ENCODE measurements at regions of chr1 and their contacts with region 1.

Region 1: DNA sequence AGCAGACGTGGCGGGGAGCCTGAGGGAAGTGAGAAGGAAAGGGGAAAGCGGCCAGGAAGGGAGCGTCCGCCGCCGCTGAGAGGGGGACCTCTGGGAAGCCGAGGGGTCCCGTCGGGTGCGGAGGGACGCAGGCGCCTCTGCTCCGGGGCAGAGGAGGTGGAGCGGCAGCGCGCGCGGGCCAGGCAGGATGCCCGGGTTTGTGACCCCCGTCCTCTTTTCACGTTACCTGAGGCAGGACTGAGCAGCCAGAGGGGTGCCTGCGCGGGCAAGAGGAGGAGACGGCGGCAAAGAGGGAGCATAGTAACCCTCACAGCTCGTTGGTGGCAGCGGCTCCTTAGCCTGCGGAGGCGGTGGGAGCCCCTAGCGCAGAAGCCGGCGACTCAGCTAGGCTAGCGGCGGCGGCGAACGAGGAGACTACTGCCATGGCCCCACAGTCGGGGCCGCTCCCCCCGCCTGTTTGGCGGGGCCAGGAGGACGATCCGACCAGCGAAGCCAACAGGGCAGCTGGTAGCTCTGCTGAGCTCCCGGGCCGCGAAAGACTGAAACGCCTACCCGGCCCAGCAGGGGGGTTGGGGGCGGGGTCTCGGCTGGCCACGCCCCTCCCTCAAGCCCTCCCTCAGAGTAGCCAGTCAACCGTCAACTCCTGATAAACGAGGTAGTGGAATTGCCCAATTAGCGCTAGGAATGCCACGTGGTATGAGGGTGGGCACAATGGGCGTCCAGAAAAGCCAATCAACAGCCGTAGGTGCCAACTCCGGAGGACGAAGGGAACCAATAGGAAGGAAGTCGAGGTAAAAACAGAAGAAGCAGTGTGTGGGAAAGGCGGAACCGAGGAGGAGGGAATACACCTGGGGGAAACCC is at the start of gene TESK2:
- DNase-seq: peak; percentile 89 to 99 (median 98)
- ATAC-seq: peak; percentile 96
- H3K4me3 ChIP-seq: peak within 1 kb of the TSS; percentile 76
- H3K4me3 Mint-ChIP-seq: no peak within 1 kb of the TSS
- H3K27ac ChIP-seq: peak within 1 kb of the TSS; percentile 77
- H3K27ac Mint-ChIP-seq: no peak within 1 kb of the TSS
- H3K4me1 ChIP-seq: peaks cover 9% of the 10 kb centered on the region in 2 donors
- H3K4me1 Mint-ChIP-seq: peaks cover 5 to 15% (median 10%) of the 10 kb centered on the region in 7 donors
- H3K27me3 ChIP-seq: no peaks in the 10 kb centered on the region
- H3K27me3 Mint-ChIP-seq: peaks cover 0 to 4% (median 0%) of the 10 kb centered on the region in 5 donors
- total RNA-seq, gene TESK2: 3.3 to 8.9 (median 7.4) TPM

Region 2: GRCh38 chr1:44714944-44715571 is 775.8 kb before region 1 on chr1:
- CTCF ChIA-PET with region 1: interaction called, 4 read pairs
- POLR2A ChIA-PET with region 1: no interaction called
- intact Hi-C with region 1: loop called in 1 of 2 experiments (anchors 1 kb)
- DNase-seq: peak; percentile 46 to 77 (median 69)
- ATAC-seq: peak; percentile 98
- H3K4me3 ChIP-seq: peak overlapping the region; percentile 28
- H3K4me3 Mint-ChIP-seq: peak overlapping the region; percentile 24 to 72 (median 66)
- H3K27ac ChIP-seq: peak overlapping the region; percentile 39
- H3K27ac Mint-ChIP-seq: peak overlapping the region; percentile 40 to 85 (median 68)
- H3K4me1 ChIP-seq: peaks cover 11 to 37% of the 10 kb centered on the region in 2 donors
- H3K4me1 Mint-ChIP-seq: peaks cover 39 to 52% (median 47%) of the 10 kb centered on the region in 7 donors
- H3K27me3 ChIP-seq: no peaks in the 10 kb centered on the region
- H3K27me3 Mint-ChIP-seq: peaks cover 0 to 9% (median 0%) of the 10 kb centered on the region in 5 donors

Region 3: GRCh38 chr1:44799770-44800584 is 690.9 kb before region 1 on chr1 and contains the start of gene PLK3:
- CTCF ChIA-PET with region 1: no interaction called
- POLR2A ChIA-PET with region 1: no interaction called
- intact Hi-C with region 1: loop called (anchors 10 kb)
- DNase-seq: peak; percentile 93 to 99 (median 98)
- ATAC-seq: peak; percentile 92
- H3K4me3 ChIP-seq: peak within 1 kb of the TSS; percentile 66
- H3K4me3 Mint-ChIP-seq: peak within 1 kb of the TSS; percentile 85 to 98 (median 93)
- H3K27ac ChIP-seq: peak within 1 kb of the TSS; percentile 94
- H3K27ac Mint-ChIP-seq: peak within 1 kb of the TSS; percentile 84 to 99 (median 98)
- H3K4me1 ChIP-seq: peaks cover 17 to 24% of the 10 kb centered on the region in 2 donors
- H3K4me1 Mint-ChIP-seq: peaks cover 19 to 43% (median 33%) of the 10 kb centered on the region in 7 donors
- H3K27me3 ChIP-seq: no peaks in the 10 kb centered on the region
- H3K27me3 Mint-ChIP-seq: no peaks in the 10 kb centered on the region
- total RNA-seq, gene PLK3: 92.8 to 456 (median 142) TPM

Region 4: DNA sequence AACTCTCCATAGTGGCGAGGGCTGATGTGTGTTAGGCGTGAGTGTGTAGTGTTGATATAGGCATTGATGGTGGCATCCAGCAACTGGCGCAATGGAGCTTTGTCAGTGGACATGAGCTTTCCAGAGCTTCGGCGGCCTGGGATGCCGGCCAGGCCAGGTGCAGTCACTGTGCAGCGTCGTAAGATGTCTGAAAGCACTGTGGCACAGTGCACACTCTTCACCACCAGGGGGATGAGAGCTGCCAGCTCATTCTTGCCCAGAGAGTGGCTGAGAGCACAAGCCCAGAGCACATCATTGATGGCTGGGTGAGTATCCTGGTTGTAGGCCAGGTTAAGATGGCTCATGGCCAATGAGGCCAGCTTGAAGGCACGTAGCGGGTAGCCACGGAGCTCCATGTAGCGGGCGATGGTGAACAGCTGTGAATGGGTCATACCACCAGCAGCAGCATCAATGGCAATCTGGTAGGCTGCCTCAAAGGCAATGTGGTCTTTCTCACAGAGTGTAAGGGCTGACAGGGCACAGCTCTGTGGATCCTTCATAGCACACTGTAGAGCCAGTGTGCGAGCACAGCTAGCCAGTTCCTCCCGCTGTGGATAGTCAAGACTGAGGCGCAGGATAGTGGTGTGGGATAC is 472.1 kb before region 1 on chr1:
- CTCF ChIA-PET with region 1: interaction called, 77 read pairs
- POLR2A ChIA-PET with region 1: interaction called, 42 read pairs
- intact Hi-C with region 1: loop called in 1 of 2 experiments (anchors 1 kb)
- DNase-seq: peak in 8 of 9 donors; percentile 34 to 70 (median 58)
- ATAC-seq: peak; percentile 88
- H3K4me3 ChIP-seq: no peak overlapping the region
- H3K4me3 Mint-ChIP-seq: no peak overlapping the region
- H3K27ac ChIP-seq: no peak overlapping the region
- H3K27ac Mint-ChIP-seq: peak overlapping the region in 4 of 9 donors; percentile 15 to 91 (median 54)
- H3K4me1 ChIP-seq: peaks cover 0 to 5% of the 10 kb centered on the region in 2 donors
- H3K4me1 Mint-ChIP-seq: peaks cover 7 to 21% (median 17%) of the 10 kb centered on the region in 7 donors
- H3K27me3 ChIP-seq: no peaks in the 10 kb centered on the region
- H3K27me3 Mint-ChIP-seq: no peaks in the 10 kb centered on the region

Region 5: DNA sequence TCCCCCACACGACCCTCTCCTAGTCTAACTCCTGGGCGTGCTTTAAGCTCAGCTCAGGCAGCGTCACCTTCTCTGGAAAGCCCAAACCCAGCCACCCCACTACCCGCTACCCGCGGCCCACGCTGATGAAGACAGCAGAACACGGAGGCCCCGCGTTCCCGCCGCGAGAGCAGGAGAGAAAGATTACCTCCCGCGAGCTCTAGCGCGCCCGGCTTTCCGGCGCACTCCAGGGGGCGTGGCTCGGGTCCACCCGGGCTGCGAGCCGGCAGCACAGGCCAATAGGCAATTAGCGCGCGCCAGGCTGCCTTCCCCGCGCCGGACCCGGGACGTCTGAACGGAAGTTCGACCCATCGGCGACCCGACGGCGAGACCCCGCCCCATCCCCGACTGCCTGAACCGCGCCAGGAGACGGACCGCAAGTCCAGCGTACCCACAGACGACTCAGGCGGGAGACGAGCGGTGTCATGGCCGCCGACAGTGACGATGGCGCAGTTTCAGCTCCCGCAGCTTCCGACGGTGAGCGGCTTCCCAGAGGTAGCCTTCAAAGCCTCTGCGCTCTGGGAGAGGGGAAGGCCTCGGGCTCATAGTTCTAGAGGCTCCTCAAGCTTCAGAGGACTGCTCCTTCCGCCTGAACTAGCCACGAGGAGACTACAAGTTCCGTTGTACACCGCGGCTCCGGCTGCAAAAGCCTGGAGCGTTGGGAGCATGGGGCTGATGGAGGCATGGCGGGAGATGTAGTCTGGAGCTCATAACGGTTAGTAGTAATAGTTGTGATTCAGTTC is 150.9 kb before region 1 on chr1 and contains the starts of genes MUTYH and TOE1:
- CTCF ChIA-PET with region 1: interaction called, 26 read pairs
- POLR2A ChIA-PET with region 1: interaction called, 45 read pairs
- intact Hi-C with region 1: loop called (anchors 1 kb)
- DNase-seq: peak; percentile 84 to 95 (median 89)
- ATAC-seq: peak; percentile 91
- H3K4me3 ChIP-seq: peak within 1 kb of the TSS; percentile 83
- H3K4me3 Mint-ChIP-seq: peak within 1 kb of the TSS; percentile 95 to 100 (median 99)
- H3K27ac ChIP-seq: peak within 1 kb of the TSS; percentile 99
- H3K27ac Mint-ChIP-seq: peak within 1 kb of the TSS; percentile 96 to 99 (median 99)
- H3K4me1 ChIP-seq: peaks cover 31 to 33% of the 10 kb centered on the region in 2 donors
- H3K4me1 Mint-ChIP-seq: peaks cover 24 to 75% (median 61%) of the 10 kb centered on the region in 7 donors
- H3K27me3 ChIP-seq: no peaks in the 10 kb centered on the region
- H3K27me3 Mint-ChIP-seq: no peaks in the 10 kb centered on the region
- total RNA-seq, gene MUTYH: 56.7 to 85.4 (median 67.7) TPM
- total RNA-seq, gene TOE1: 20.6 to 53.3 (median 25.7) TPM

Region 6: GRCh38 chr1:45569962-45570581 is 79.2 kb after region 1 on chr1:
- CTCF ChIA-PET with region 1: interaction called, 25 read pairs
- POLR2A ChIA-PET with region 1: interaction called, 4 read pairs
- intact Hi-C with region 1: no loop called
- DNase-seq: peak; percentile 46 to 74 (median 65)
- ATAC-seq: peak; percentile 99
- H3K4me3 ChIP-seq: no peak overlapping the region
- H3K4me3 Mint-ChIP-seq: no peak overlapping the region
- H3K27ac ChIP-seq: no peak overlapping the region
- H3K27ac Mint-ChIP-seq: peak overlapping the region in 1 of 9 donors; percentile 63
- H3K4me1 ChIP-seq: no peaks in the 10 kb centered on the region
- H3K4me1 Mint-ChIP-seq: peaks cover 0 to 4% (median 0%) of the 10 kb centered on the region in 7 donors
- H3K27me3 ChIP-seq: no peaks in the 10 kb centered on the region
- H3K27me3 Mint-ChIP-seq: no peaks in the 10 kb centered on the region

Region 7: GRCh38 chr1:46247436-46248121 is 756.7 kb after region 1 on chr1 and contains the start of gene RAD54L:
- CTCF ChIA-PET with region 1: no interaction called
- POLR2A ChIA-PET with region 1: no interaction called
- intact Hi-C with region 1: loop called in 1 of 2 experiments (anchors 1 kb)
- DNase-seq: peak; percentile 83 to 97 (median 95)
- ATAC-seq: peak; percentile 99
- H3K4me3 ChIP-seq: peak within 1 kb of the TSS; percentile 89
- H3K4me3 Mint-ChIP-seq: peak within 1 kb of the TSS; percentile 86 to 100 (median 94)
- H3K27ac ChIP-seq: peak within 1 kb of the TSS; percentile 66
- H3K27ac Mint-ChIP-seq: peak within 1 kb of the TSS; percentile 62 to 96 (median 78)
- H3K4me1 ChIP-seq: peaks cover 4 to 8% of the 10 kb centered on the region in 2 donors
- H3K4me1 Mint-ChIP-seq: peaks cover 0 to 41% (median 17%) of the 10 kb centered on the region in 7 donors
- H3K27me3 ChIP-seq: no peaks in the 10 kb centered on the region
- H3K27me3 Mint-ChIP-seq: no peaks in the 10 kb centered on the region
- total RNA-seq, gene RAD54L: 0.94 to 31.9 (median 2.1) TPM

Measured in naive thymus-derived CD4-positive, alpha-beta T cell (primary cell).